ENCODE measurements at regions of chr17 and their contacts with region 1.

Region 1: DNA sequence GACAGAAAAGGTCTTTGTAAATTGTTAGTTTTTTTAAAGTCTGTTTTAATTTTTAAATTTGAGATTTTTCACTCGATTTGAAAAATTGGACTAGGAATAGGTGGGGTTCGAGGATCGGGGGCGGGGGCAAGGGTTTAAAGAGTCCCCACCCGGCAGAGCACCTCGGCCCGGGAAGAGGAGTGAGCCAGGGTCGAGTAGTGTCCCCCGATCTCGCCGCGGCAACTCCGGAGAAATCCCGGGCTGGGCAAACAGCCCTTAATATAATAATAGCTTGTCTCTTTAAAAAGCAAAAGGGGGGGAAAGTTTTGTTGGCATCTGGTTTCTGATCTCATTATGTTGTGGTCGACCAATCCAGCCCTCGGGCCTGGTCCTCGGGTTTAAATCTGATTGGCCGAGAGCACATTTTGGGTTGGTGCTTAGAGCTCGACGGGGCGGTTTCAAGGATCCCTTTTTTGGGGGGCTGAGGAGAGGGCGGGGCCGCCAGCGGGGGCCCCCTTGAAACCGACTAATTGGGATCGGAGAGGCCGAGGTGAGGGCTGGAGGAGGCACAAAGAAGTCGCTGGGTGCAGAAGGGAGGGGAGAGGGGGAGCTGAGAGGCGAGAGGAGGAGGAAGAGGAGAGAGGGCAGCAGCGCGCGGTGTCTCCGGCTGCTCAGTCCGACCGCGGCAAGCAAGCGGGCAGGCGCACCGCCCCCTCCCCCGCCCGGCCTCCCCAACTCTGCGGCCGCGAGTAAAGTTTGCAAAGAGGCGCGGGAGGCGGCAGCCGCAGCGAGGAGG is at the start of gene FZD2:
- DNase-seq: peak; percentile 98
- H3K4me3 Mint-ChIP-seq: peak within 1 kb of the TSS; percentile 95
- H3K27ac Mint-ChIP-seq: peak within 1 kb of the TSS; percentile 100
- H3K4me1 Mint-ChIP-seq: peaks cover 30% of the 10 kb centered on the region
- H3K27me3 Mint-ChIP-seq: no peaks in the 10 kb centered on the region
- CTCF ChIP-seq: no peak
- total RNA-seq, gene FZD2: 6.8 and 10.1 TPM in 2 replicates

Region 2: GRCh38 chr17:44473367-44473766 is 83.7 kb before region 1 on chr17:
- CTCF ChIA-PET with region 1: no interaction called
- POLR2A ChIA-PET with region 1: no interaction called
- intact Hi-C with region 1: no loop called
- DNase-seq: no peak
- H3K4me3 Mint-ChIP-seq: no peak overlapping the region
- H3K27ac Mint-ChIP-seq: no peak overlapping the region
- H3K4me1 Mint-ChIP-seq: no peaks in the 10 kb centered on the region
- H3K27me3 Mint-ChIP-seq: no peaks in the 10 kb centered on the region
- CTCF ChIP-seq: no peak

Region 3: DNA sequence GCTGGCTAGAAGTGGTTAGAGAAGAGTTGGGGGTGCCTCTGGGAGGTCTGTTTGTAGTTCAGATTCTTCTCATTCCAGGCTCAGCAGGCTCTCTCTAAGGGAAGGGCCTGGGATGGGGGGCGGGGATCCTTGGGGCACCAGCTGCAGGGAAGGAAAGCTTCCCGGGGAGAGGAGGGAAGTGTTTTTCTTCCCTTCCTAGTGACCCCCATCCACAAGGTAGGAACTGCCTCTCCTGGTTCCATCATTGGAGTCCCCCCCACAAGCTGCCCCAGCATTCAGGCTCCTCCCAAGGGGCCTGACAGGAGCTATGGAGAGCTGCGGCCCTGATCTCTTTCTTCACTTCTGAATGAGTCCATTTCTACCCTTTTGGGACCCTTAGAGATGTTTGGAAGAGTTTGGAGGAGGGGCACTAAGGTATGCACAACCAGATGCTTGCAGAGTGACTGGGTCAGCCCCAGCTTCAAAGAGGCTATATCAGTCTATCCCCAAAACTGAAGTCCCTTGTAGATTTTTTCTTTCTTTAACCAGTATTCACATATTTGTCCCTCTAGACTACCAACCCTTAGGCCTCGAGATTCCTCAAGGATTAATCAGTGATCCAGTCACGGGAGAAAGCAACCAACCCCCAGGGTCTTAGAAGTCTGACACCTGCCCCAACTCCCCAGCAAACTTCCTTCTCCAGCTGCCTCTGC is 13.7 kb before region 1 on chr17:
- CTCF ChIA-PET with region 1: no interaction called
- POLR2A ChIA-PET with region 1: interaction called, 25 read pairs
- intact Hi-C with region 1: no loop called
- DNase-seq: peak; percentile 60
- H3K4me3 Mint-ChIP-seq: peak overlapping the region; percentile 14
- H3K27ac Mint-ChIP-seq: peak overlapping the region; percentile 92
- H3K4me1 Mint-ChIP-seq: peaks cover 51% of the 10 kb centered on the region
- H3K27me3 Mint-ChIP-seq: no peaks in the 10 kb centered on the region
- CTCF ChIP-seq: no peak

Region 4: DNA sequence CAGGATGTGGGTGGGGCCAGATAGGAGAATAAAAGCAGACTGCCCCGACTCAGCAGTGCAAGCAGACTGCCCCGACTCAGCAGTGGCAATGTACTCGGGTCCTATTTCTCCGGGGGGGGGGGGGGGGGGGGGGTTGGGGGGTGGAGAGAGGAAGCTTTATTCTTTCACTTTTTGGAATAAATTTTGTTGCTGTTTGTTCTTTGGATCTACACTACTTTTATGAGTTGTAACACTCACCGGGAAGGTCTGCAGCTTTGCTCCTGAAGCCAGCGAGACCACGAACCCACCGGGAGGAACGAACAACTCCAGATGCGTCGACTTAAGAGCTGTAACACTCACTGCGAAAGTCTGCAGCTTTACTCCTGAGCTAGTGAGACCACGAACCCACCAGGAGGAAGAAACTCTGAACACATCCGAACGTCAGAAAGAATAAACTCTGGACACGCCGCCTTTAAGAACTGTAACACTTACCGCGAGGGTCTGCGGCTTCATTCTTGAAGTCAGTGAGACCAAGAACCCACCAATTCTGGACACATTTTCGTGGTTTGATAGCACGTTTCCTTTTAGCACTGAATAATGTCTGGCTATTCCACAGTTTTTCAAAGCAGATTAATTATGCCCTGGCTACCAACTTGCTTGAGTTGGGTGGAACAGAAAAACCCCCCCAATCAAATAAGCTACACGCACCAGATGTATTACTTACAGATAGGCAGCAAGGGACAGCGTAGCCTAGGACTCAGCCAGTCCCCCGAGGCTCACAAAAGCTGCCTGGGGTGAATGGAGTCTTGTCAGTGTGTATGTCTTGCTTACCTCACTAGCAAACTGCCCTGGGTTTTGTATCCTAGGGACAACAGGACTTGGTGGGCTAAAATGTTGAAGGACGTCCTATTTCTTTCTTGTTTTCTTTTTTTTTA is 12.2 kb after region 1 on chr17:
- CTCF ChIA-PET with region 1: no interaction called
- POLR2A ChIA-PET with region 1: interaction called, 11 read pairs
- intact Hi-C with region 1: no loop called
- DNase-seq: peak; percentile 11
- H3K4me3 Mint-ChIP-seq: no peak overlapping the region
- H3K27ac Mint-ChIP-seq: no peak overlapping the region
- H3K4me1 Mint-ChIP-seq: no peaks in the 10 kb centered on the region
- H3K27me3 Mint-ChIP-seq: no peaks in the 10 kb centered on the region
- CTCF ChIP-seq: no peak

Region 5: GRCh38 chr17:45031231-45032173 is 474.5 kb after region 1 on chr17:
- CTCF ChIA-PET with region 1: no interaction called
- POLR2A ChIA-PET with region 1: no interaction called
- intact Hi-C with region 1: no loop called
- DNase-seq: no peak
- H3K4me3 Mint-ChIP-seq: no peak overlapping the region
- H3K27ac Mint-ChIP-seq: no peak overlapping the region
- H3K4me1 Mint-ChIP-seq: no peaks in the 10 kb centered on the region
- H3K27me3 Mint-ChIP-seq: no peaks in the 10 kb centered on the region
- CTCF ChIP-seq: no peak